Natural killer cell (primary cell): ENCODE measurements at regions of chr17 and their contacts with region 1.

Region 1: GRCh38 chr17:42388381-42389134 is at the start of gene STAT3:
- DNase-seq: peak; percentile 100
- ATAC-seq: peak; percentile 86 to 97 (median 89)
- H3K4me3 ChIP-seq: peak within 1 kb of the TSS; percentile 87
- H3K4me3 Mint-ChIP-seq: peak within 1 kb of the TSS; percentile 93
- H3K27ac ChIP-seq: peak within 1 kb of the TSS; percentile 99
- H3K27ac Mint-ChIP-seq: peak within 1 kb of the TSS; percentile 99 to 100
- H3K4me1 ChIP-seq: peaks cover 9% of the 10 kb centered on the region
- H3K4me1 Mint-ChIP-seq: peaks cover 39 to 45% of the 10 kb centered on the region in 2 donors
- H3K27me3 ChIP-seq: no peaks in the 10 kb centered on the region
- H3K27me3 Mint-ChIP-seq: no peaks in the 10 kb centered on the region
- CTCF ChIP-seq: no peak
- total RNA-seq, gene STAT3: 190 to 246 (median 206) TPM

Region 2: DNA sequence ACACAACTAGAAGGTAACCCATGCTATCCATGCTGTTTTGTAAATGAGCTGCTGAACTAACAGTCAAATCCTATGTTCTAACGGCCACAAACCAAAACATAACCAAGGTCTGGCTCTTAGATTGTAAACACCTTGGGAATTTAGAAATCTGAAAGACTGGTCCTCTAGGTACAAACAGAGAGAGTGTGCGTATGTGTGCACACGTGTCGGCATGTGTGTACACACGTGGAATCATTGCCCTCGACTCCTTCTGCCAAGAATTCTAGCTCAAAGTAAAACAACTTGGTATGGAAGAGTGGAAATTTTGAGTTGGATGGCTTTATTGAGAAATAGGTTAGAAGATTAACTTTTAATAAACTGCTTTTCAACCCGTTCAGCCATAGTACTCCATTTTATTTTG is 176.2 kb before region 1 on chr17:
- intact Hi-C with region 1: no loop called
- DNase-seq: no peak
- ATAC-seq: no peak
- H3K4me3 ChIP-seq: no peak overlapping the region
- H3K4me3 Mint-ChIP-seq: no peak overlapping the region
- H3K27ac ChIP-seq: no peak overlapping the region
- H3K27ac Mint-ChIP-seq: no peak overlapping the region
- H3K4me1 ChIP-seq: no peaks in the 10 kb centered on the region
- H3K4me1 Mint-ChIP-seq: no peaks in the 10 kb centered on the region
- H3K27me3 ChIP-seq: no peaks in the 10 kb centered on the region
- H3K27me3 Mint-ChIP-seq: no peaks in the 10 kb centered on the region
- CTCF ChIP-seq: no peak

Region 3: DNA sequence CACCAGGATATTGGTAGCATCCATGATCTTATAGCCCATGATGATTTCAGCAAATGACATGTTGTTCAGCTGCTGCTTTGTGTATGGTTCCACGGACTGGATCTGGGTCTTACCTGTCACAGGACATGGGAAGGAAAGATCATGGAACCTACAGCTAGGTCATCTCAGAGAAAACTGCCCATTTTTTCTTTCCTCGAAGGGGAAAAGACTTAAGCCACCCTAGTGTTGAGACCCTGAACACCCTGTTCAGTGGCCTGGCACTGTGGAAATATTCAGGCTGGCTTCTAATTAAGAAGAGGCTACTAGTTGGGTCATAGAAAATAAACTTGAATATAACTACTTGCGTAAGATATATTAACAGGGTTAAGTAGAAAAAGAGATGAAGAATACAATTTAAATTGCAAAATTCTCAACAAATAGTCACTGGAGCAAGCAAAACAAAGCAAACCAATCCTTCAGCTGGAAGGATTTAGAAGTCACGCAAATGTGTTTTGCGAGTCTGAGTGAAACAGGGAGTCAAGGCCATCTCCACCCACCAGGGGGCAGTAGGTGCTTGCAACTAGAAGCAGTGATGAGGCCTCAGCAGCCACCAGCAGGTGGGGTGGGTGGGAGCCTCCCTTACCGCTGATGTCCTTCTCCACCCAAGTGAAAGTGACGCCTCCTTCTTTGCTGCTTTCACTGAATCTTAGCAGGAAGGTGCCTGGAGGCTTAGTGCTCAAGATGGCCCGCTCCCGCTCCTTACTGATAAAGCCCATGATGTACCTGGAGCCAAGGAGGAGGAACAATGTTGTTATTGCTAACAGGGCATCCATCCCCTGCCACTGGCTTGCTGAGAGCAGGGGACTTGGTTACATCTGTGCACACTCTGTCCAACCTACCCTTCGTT is 65.9 kb before region 1 on chr17:
- intact Hi-C with region 1: loop called (anchors 5 kb)
- DNase-seq: peak; percentile 91 to 98
- ATAC-seq: peak; percentile 99
- H3K4me3 ChIP-seq: no peak overlapping the region
- H3K4me3 Mint-ChIP-seq: no peak overlapping the region
- H3K27ac ChIP-seq: no peak overlapping the region
- H3K27ac Mint-ChIP-seq: peak overlapping the region in 1 of 2 donors; percentile 31
- H3K4me1 ChIP-seq: peaks cover 14% of the 10 kb centered on the region
- H3K4me1 Mint-ChIP-seq: peaks cover 14 to 20% of the 10 kb centered on the region in 2 donors
- H3K27me3 ChIP-seq: no peaks in the 10 kb centered on the region
- H3K27me3 Mint-ChIP-seq: no peaks in the 10 kb centered on the region
- CTCF ChIP-seq: peak; percentile 100

Region 4: DNA sequence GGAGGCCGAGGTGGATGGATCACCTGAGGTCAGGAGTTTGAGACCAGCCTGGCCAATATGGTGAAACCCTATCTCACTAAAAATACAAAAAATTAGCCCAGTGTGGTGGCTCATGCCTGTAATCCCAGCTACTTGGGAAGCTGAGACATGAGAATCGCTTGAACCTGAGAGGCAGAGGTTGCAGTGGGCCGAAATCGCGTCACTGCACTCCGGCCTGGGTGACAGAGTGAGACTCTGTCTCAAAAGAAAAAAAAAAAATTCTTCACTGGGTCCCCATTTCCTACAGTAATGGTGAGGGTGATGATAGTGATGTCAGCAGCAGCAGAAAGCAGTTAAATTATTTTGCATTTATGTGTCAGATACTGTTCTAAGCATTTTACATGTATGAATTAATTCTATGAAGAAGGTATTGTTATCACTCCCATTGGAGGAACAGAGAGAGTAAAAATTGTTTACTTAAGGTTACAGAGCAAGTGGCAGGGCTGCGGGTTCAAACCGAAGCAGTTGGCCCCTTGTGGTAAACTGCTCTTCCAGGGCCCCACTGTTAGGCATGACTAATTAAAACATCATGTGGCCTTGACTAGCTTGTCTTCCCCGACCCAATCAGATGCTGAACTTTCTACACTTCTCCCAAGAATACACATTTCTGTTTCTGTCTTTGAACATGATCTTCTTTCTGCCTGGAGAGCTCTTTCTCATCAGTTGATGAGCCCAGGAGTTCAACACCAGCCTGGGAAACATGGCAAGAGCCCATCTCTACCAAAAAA is 46.1 kb before region 1 on chr17:
- intact Hi-C with region 1: loop called (anchors 5 kb)
- DNase-seq: peak in 1 of 2 donors; percentile 36
- ATAC-seq: peak; percentile 33 to 64 (median 53)
- H3K4me3 ChIP-seq: no peak overlapping the region
- H3K4me3 Mint-ChIP-seq: no peak overlapping the region
- H3K27ac ChIP-seq: no peak overlapping the region
- H3K27ac Mint-ChIP-seq: peak overlapping the region; percentile 27 to 73
- H3K4me1 ChIP-seq: peaks cover 24% of the 10 kb centered on the region
- H3K4me1 Mint-ChIP-seq: peaks cover 23 to 28% of the 10 kb centered on the region in 2 donors
- H3K27me3 ChIP-seq: no peaks in the 10 kb centered on the region
- H3K27me3 Mint-ChIP-seq: no peaks in the 10 kb centered on the region
- CTCF ChIP-seq: no peak

Region 5: GRCh38 chr17:42361781-42362186 is 26.8 kb before region 1 on chr17:
- intact Hi-C with region 1: loop called (anchors 1 kb)
- DNase-seq: peak; percentile 28 to 63
- ATAC-seq: peak; percentile 81 to 92 (median 87)
- H3K4me3 ChIP-seq: no peak overlapping the region
- H3K4me3 Mint-ChIP-seq: peak overlapping the region; percentile 65
- H3K27ac ChIP-seq: peak overlapping the region; percentile 41
- H3K27ac Mint-ChIP-seq: peak overlapping the region; percentile 66 to 79
- H3K4me1 ChIP-seq: peaks cover 43% of the 10 kb centered on the region
- H3K4me1 Mint-ChIP-seq: peaks cover 64% of the 10 kb centered on the region in 2 donors
- H3K27me3 ChIP-seq: no peaks in the 10 kb centered on the region
- H3K27me3 Mint-ChIP-seq: no peaks in the 10 kb centered on the region
- CTCF ChIP-seq: no peak

Region 6: GRCh38 chr17:42459256-42459800 is 70.8 kb after region 1 on chr17:
- intact Hi-C with region 1: loop called (anchors 5 kb)
- DNase-seq: peak in 1 of 2 donors; percentile 36
- ATAC-seq: peak in 1 of 3 donors; percentile 6
- H3K4me3 ChIP-seq: peak overlapping the region; percentile 50
- H3K4me3 Mint-ChIP-seq: peak overlapping the region; percentile 84
- H3K27ac ChIP-seq: peak overlapping the region; percentile 57
- H3K27ac Mint-ChIP-seq: peak overlapping the region in 1 of 2 donors; percentile 72
- H3K4me1 ChIP-seq: peaks cover 41% of the 10 kb centered on the region
- H3K4me1 Mint-ChIP-seq: peaks cover 43 to 45% of the 10 kb centered on the region in 2 donors
- H3K27me3 ChIP-seq: peaks cover 24% of the 10 kb centered on the region
- H3K27me3 Mint-ChIP-seq: peaks cover 28 to 34% of the 10 kb centered on the region in 2 donors
- CTCF ChIP-seq: no peak

Region 7: GRCh38 chr17:42609182-42609813 is 220.7 kb after region 1 on chr17 and contains the starts of genes RETREG3 and TUBG1:
- intact Hi-C with region 1: loop called (anchors 2 kb)
- DNase-seq: peak; percentile 98 to 100
- ATAC-seq: peak; percentile 88 to 95 (median 90)
- H3K4me3 ChIP-seq: peak within 1 kb of the TSS; percentile 98
- H3K4me3 Mint-ChIP-seq: peak within 1 kb of the TSS; percentile 100
- H3K27ac ChIP-seq: peak within 1 kb of the TSS; percentile 90
- H3K27ac Mint-ChIP-seq: peak within 1 kb of the TSS; percentile 96 to 97
- H3K4me1 ChIP-seq: peaks cover 32% of the 10 kb centered on the region
- H3K4me1 Mint-ChIP-seq: peaks cover 44 to 53% of the 10 kb centered on the region in 2 donors
- H3K27me3 ChIP-seq: no peaks in the 10 kb centered on the region
- H3K27me3 Mint-ChIP-seq: no peaks in the 10 kb centered on the region
- CTCF ChIP-seq: no peak
- total RNA-seq, gene RETREG3: 76.0 to 114 (median 101) TPM
- total RNA-seq, gene TUBG1: 9.7 to 16.5 (median 13.0) TPM

Region 8: DNA sequence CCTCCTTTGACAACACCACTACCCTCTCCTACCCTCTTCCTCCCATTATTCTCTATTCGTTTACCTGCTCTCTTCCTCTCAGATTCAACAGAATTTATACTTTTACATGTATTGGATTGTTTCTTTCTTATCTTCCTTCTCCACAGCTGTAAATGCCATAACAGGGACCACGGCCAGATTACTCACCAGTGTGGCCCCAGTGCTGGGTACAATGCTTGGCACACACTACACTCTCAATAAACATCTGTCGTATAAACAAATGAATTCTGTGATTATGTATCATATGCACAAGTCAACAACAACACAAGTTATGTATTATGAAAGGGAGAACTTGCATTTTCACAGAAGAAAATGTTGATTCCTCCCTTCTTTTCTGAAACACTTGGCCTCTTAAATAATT is 555.7 kb after region 1 on chr17:
- intact Hi-C with region 1: no loop called
- DNase-seq: no peak
- ATAC-seq: no peak
- H3K4me3 ChIP-seq: no peak overlapping the region
- H3K4me3 Mint-ChIP-seq: no peak overlapping the region
- H3K27ac ChIP-seq: no peak overlapping the region
- H3K27ac Mint-ChIP-seq: no peak overlapping the region
- H3K4me1 ChIP-seq: no peaks in the 10 kb centered on the region
- H3K4me1 Mint-ChIP-seq: no peaks in the 10 kb centered on the region
- H3K27me3 ChIP-seq: no peaks in the 10 kb centered on the region
- H3K27me3 Mint-ChIP-seq: peaks cover 0 to 4% of the 10 kb centered on the region in 2 donors
- CTCF ChIP-seq: no peak